CD4-positive, alpha-beta T cell (primary cell): ENCODE measurements at regions of chr2 and their contacts with region 1.

Region 1: DNA sequence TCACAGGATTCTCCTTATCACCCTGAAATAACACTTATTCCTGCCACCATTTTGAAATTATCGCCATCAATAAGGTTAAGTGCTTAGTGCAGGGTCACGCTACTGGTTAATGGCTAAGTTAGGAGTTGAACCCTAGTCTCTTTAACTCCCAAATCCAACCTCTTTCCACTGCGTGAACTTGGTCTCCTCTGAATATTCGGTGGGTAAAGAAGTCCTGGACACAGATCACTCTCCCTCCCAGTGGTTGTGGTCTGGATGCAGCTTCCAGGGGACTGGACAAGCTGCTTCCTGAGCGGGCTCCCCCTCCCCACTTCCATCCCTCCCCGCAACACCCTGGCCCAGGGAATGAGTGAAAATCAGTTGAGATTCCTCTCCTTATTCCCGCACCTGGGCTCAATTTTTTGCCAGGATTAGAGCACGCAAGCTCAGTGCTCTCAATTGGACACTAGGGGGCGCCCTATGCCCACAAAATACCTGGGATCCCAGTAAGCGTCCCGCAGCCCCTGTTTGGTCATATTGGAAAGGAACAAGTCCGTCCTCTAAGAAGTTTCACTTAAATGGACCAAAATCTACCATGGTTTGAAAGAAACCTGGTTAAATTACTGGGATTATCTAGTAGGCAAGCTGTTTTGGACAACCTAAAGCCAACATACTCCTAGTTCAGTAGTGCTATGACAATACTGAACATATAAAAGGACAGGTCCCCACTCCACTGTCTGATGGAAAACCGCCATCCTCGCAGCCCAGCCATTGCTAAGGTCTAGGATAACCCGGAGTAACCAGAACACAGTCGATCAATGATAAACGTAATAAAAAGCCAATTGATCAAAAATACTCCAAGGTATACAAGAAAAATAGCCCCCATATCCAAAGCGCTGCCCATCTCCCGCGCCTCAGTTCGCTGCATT is 40.4 kb downstream of the DHRS9 start:
- DNase-seq: peak; percentile 55 to 86 (median 62)
- ATAC-seq: no peak
- H3K4me3 ChIP-seq: no peak overlapping the region
- H3K4me3 Mint-ChIP-seq: no peak overlapping the region
- H3K27ac ChIP-seq: no peak overlapping the region
- H3K27ac Mint-ChIP-seq: no peak overlapping the region
- H3K4me1 ChIP-seq: peaks cover 48% of the 10 kb centered on the region
- H3K4me1 Mint-ChIP-seq: peaks cover 47% of the 10 kb centered on the region
- H3K27me3 ChIP-seq: no peaks in the 10 kb centered on the region
- H3K27me3 Mint-ChIP-seq: peaks cover 8% of the 10 kb centered on the region
- CTCF ChIP-seq: peak; percentile 96

Region 2: DNA sequence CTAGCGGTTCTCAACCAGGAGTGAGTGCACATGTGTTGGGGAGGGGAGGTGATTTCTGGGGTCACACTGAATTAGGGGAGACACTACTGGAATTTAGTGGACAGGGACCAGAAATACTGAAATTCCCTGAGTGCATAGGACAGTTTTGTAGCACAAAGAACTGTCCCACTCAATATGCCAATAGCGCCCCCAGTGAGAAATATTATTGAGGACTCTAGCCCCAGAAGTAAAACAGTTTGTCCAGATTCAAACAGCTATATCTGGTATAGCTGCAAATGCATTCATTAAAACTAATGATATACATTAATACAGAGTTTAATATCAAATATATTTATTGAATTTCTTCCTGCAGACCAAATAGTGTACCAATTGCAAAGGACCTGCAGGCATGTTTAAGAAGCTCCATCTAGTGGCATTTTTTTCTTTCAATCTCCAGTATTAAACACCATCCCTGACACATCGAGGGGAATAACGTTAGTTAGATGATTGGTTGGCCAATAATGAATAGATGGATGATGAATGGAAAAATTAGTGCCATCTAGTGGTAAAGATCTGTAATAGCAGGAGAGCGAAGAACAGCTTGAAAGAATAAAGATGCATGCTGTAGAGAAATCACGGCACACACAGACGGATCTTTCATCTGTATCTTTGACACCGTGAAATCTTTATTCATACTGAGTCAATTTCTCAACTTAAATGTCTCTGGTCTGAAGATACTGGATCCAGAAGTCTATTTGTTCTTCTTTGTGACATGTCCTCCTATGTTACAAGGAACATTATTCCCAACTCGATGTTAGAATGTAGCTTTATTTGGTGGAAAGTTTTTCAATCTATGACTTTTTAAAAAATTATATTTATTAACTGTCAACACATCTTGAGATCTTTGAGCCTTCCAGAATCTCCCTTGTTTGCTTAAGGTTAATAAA is 22.1 kb after region 1 on chr2:
- CTCF ChIA-PET with region 1: interaction called, 14 read pairs
- POLR2A ChIA-PET with region 1: interaction called, 7 read pairs
- intact Hi-C with region 1: loop called (anchors 1 kb)
- DNase-seq: peak in 3 of 14 experiments; percentile 56 to 82 (median 72)
- ATAC-seq: peak; percentile 79
- H3K4me3 ChIP-seq: no peak overlapping the region
- H3K4me3 Mint-ChIP-seq: no peak overlapping the region
- H3K27ac ChIP-seq: no peak overlapping the region
- H3K27ac Mint-ChIP-seq: no peak overlapping the region
- H3K4me1 ChIP-seq: no peaks in the 10 kb centered on the region
- H3K4me1 Mint-ChIP-seq: no peaks in the 10 kb centered on the region
- H3K27me3 ChIP-seq: no peaks in the 10 kb centered on the region
- H3K27me3 Mint-ChIP-seq: no peaks in the 10 kb centered on the region
- CTCF ChIP-seq: peak; percentile 94

Region 3: DNA sequence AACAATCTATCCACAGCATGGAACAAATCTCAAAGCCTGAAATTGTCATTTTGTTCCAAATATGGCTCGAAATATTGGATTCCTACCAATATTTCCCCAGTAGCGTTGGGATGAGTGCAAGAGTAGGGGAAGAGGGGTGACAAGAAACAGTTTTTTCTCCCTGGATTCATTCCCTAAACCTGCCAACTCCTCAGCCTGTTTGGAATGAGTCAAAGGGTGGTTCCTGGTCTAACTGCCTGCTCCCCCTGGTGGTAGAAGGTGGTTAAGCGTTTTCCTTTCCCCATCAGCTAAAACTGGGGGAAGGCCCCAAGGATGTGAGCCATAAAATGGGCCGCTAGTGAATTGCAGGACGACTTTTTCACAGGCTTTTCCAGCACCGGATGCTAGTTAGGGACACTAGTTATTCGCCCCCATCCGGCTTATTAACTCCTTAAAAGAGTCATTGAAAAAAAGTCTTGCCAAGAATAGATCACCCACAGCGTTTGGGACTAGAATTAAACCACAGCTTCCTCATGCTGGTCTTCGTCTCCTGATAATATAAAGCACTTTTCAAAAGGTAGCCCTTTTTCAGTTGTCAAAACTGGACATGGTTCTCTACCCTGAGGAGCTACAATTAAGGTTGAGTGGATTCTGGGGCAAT is 32.1 kb after region 1 on chr2:
- CTCF ChIA-PET with region 1: interaction called, 24 read pairs
- POLR2A ChIA-PET with region 1: interaction called, 6 read pairs
- intact Hi-C with region 1: loop called (anchors 1 to 2 kb)
- DNase-seq: peak; percentile 19 to 80 (median 46)
- ATAC-seq: peak; percentile 55
- H3K4me3 ChIP-seq: no peak overlapping the region
- H3K4me3 Mint-ChIP-seq: no peak overlapping the region
- H3K27ac ChIP-seq: no peak overlapping the region
- H3K27ac Mint-ChIP-seq: no peak overlapping the region
- H3K4me1 ChIP-seq: peaks cover 6% of the 10 kb centered on the region
- H3K4me1 Mint-ChIP-seq: no peaks in the 10 kb centered on the region
- H3K27me3 ChIP-seq: no peaks in the 10 kb centered on the region
- H3K27me3 Mint-ChIP-seq: no peaks in the 10 kb centered on the region
- CTCF ChIP-seq: peak; percentile 84

Region 4: DNA sequence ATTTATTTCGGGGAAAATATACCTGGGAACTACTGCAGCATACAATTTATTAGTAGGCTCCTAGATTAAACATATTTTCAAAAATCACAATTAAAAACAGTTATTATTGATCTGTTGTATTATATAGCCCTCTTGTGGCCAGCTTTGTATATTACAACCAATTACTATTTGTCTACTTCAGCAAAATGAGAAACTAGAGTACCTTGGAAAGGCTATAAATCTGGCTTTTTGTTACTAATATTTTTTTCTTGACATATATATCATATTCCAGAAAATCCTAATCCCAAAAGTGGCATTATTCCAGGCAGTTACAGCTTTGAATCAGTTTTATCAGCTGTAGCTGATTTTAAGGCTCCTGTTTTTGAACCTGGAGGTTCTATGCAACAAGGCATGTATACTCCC is 818.7 kb after region 1 on chr2:
- CTCF ChIA-PET with region 1: no interaction called
- POLR2A ChIA-PET with region 1: no interaction called
- intact Hi-C with region 1: loop called in 1 of 2 experiments (anchors 5 kb)
- DNase-seq: peak in 3 of 14 experiments; percentile 58 to 61 (median 60)
- ATAC-seq: peak; percentile 37
- H3K4me3 ChIP-seq: no peak overlapping the region
- H3K4me3 Mint-ChIP-seq: no peak overlapping the region
- H3K27ac ChIP-seq: no peak overlapping the region
- H3K27ac Mint-ChIP-seq: no peak overlapping the region
- H3K4me1 ChIP-seq: no peaks in the 10 kb centered on the region
- H3K4me1 Mint-ChIP-seq: no peaks in the 10 kb centered on the region
- H3K27me3 ChIP-seq: no peaks in the 10 kb centered on the region
- H3K27me3 Mint-ChIP-seq: no peaks in the 10 kb centered on the region
- CTCF ChIP-seq: peak; percentile 92

Region 5: GRCh38 chr2:169999054-169999453 is 889.3 kb after region 1 on chr2:
- CTCF ChIA-PET with region 1: no interaction called
- POLR2A ChIA-PET with region 1: no interaction called
- intact Hi-C with region 1: no loop called
- DNase-seq: no peak
- ATAC-seq: no peak
- H3K4me3 ChIP-seq: no peak overlapping the region
- H3K4me3 Mint-ChIP-seq: no peak overlapping the region
- H3K27ac ChIP-seq: no peak overlapping the region
- H3K27ac Mint-ChIP-seq: no peak overlapping the region
- H3K4me1 ChIP-seq: no peaks in the 10 kb centered on the region
- H3K4me1 Mint-ChIP-seq: peaks cover 7% of the 10 kb centered on the region
- H3K27me3 ChIP-seq: no peaks in the 10 kb centered on the region
- H3K27me3 Mint-ChIP-seq: no peaks in the 10 kb centered on the region
- CTCF ChIP-seq: no peak

Region 6: GRCh38 chr2:170292415-170292814 is 1182.7 kb after region 1 on chr2:
- CTCF ChIA-PET with region 1: no interaction called
- POLR2A ChIA-PET with region 1: no interaction called
- intact Hi-C with region 1: no loop called
- DNase-seq: no peak
- ATAC-seq: no peak
- H3K4me3 ChIP-seq: no peak overlapping the region
- H3K4me3 Mint-ChIP-seq: no peak overlapping the region
- H3K27ac ChIP-seq: no peak overlapping the region
- H3K27ac Mint-ChIP-seq: no peak overlapping the region
- H3K4me1 ChIP-seq: no peaks in the 10 kb centered on the region
- H3K4me1 Mint-ChIP-seq: no peaks in the 10 kb centered on the region
- H3K27me3 ChIP-seq: peaks cover 4 to 14% of the 10 kb centered on the region in 2 experiments
- H3K27me3 Mint-ChIP-seq: peaks cover 45% of the 10 kb centered on the region
- CTCF ChIP-seq: no peak